ENCODE measurements at regions of chr18 and their contacts with region 1.

Region 1: DNA sequence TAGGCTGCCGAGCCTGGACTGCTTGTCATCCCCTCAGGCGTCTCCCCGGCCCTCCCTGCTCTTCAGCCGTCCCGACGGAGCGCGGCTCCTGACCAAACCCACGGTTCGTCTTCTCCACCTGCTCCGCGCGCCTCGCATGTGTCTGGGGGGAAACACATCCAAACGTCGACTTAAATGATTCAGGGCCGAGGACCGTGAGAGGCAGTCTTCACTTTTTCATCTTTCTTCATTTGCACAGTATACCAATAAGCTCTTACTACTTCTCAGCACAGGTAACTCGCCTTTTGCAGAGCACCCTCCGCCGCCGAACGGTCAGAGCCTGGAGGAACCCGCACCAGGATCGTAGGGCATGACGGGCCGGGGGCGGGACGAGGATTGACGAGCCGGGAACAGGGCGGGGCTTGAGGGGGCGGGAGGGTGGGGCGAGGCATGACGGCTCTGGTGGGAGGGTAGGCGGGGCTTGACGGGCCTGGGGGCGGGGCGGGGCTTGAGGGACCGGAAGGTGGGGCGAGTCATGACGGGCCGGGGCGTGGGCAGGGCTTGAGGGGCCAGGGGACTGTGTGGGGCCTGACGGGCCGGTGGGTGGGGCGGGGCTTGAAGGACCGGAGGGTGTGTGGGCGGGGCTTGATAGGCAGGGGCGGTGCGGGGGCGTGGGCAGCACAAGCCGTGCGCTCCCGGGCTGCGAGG is at the start of gene SEH1L:
- DNase-seq: peak; percentile 100
- H3K4me3 ChIP-seq: peak within 1 kb of the TSS; percentile 55 to 72 (median 64)
- H3K27ac ChIP-seq: peak within 1 kb of the TSS; percentile 94 to 99 (median 98)
- H3K4me1 ChIP-seq: peaks cover 0 to 24% (median 16%) of the 10 kb centered on the region in 4 donors
- H3K27me3 ChIP-seq: no peaks in the 10 kb centered on the region
- CTCF ChIP-seq: no peak
- EP300 ChIP-seq: no peak
- POLR2A ChIP-seq: peak; percentile 52 to 56
- total RNA-seq, gene SEH1L: 15.3 to 38.1 (median 20.3) TPM

Region 2: DNA sequence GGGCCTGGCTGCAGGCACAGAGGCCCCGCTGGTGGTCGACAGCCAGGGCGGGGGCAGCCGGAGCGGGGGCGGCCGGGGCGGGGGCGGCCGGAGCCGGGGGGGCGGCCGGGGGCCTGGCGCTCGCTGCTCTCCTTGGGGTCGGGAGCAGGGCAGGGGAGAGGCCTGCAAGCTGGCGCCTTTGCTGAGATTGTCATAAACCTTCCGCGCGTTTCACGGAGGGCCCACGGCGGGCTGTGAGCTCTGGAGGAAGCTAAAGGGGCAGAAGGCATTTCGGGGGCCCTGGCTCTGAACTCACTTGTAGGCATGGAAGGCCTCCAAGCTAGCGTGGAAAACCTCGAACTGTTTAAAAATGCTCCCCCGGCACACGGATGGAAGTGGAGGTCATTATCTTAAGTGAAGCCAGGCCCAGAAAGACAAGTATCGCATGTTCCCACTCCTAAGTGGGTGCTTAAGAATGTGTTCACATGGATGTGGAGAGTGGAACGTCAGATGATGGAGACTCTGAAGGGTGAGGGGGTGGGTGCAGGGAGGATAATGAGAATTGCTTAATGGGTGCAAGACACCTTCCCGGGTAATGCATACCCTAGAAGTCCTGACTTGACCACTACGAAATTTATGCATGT is 539.1 kb before region 1 on chr18:
- intact Hi-C with region 1: loop called (anchors 10 kb)
- DNase-seq: no peak
- H3K4me3 ChIP-seq: peak overlapping the region; percentile 49 to 71 (median 64)
- H3K27ac ChIP-seq: peak overlapping the region; percentile 86 to 93 (median 92)
- H3K4me1 ChIP-seq: peaks cover 0 to 28% (median 16%) of the 10 kb centered on the region in 4 donors
- H3K27me3 ChIP-seq: no peaks in the 10 kb centered on the region
- CTCF ChIP-seq: no peak
- EP300 ChIP-seq: no peak
- POLR2A ChIP-seq: no peak

Region 3: DNA sequence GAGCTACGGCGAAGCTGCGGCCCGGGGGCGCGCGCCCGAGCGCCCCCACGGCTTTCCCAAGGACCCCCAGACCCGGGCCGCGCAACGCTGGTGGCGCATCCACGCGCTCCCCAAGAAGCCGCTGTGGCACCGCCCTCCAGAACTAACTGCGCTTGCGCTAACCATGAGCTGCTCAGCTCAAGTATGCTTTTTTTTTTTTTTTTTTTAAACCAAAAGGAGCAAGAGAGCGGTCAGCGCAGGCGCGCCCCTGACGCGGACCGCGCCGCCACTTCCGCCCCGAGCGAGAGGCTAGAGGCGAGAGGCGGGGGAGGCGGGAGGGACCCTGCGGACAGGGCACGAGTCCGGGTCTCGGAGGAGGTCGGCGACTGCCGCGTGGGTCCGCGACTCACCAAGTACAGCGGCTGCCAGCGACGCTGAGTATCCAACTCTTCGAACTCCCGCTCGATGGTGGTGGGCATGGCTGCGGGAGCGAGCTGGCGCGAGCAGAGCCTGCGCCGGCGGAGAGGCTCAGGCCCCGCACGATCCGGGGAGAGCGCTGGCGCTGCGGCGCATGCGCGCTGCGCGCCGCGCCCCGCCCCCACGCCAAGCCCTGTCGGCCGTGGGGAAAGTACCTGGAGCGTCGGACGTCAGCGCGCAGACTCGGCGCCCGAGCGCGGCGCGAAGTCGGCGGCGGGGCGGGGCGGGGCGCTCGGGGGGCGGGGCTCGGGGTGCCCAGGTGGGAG is 63.7 kb before region 1 on chr18 and contains the start of gene PTPN2:
- intact Hi-C with region 1: loop called (anchors 2 kb)
- DNase-seq: peak; percentile 98
- H3K4me3 ChIP-seq: peak within 1 kb of the TSS; percentile 68 to 87 (median 77)
- H3K27ac ChIP-seq: peak within 1 kb of the TSS; percentile 95 to 100 (median 98)
- H3K4me1 ChIP-seq: peaks cover 0 to 26% (median 15%) of the 10 kb centered on the region in 4 donors
- H3K27me3 ChIP-seq: no peaks in the 10 kb centered on the region
- CTCF ChIP-seq: no peak
- EP300 ChIP-seq: peak in 1 of 4 donors; percentile 9
- POLR2A ChIP-seq: peak; percentile 82 to 85
- total RNA-seq, gene PTPN2: 20.0 to 31.0 (median 21.0) TPM

Region 4: DNA sequence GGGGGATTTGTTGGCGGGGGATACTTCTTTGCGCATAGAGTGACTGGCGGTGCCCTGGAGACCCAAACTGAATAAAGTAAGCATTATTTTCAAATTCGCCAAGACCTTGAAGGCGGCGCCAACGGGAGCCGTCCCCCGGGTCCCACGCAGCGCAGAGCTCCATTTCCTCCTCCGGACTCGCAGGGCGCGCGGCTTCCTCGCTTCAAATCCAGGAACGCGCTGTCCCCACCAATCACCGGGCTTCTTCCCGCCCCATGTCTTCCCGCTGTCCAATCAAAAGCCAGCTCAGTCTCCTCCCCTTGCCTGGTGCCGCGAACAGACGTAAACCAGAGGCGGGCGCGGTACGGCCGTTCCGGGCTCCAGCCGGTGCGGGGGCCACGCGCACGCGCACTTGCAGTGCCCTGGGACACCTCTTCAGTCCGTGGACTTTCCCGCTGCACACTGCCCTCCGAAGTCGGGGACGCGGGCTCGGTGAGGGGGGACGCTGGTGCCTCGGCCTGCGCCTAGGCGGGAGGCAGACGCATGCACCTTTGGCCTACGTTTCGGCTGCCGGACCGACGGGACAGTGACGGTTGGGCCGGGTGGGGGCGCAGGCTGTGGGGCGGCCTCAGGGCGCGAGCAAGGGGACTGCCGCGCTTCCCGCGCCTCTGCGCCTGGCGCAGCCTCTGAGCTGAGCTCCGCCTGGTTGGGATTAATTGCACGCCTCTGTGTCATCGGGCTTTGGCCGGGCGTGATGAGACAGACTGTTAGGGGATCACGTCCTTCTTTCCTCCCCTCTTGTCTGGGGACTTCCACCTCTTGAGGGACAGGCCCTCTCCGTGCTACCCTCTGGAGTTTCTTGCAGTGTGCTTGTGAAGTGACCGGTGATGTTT is 43.7 kb after region 1 on chr18 and contains the start of gene CEP192:
- intact Hi-C with region 1: loop called (anchors 1 kb)
- DNase-seq: peak; percentile 99
- H3K4me3 ChIP-seq: peak within 1 kb of the TSS; percentile 66 to 86 (median 71)
- H3K27ac ChIP-seq: peak within 1 kb of the TSS; percentile 81 to 88 (median 87)
- H3K4me1 ChIP-seq: peaks cover 0 to 29% (median 20%) of the 10 kb centered on the region in 4 donors
- H3K27me3 ChIP-seq: no peaks in the 10 kb centered on the region
- CTCF ChIP-seq: no peak
- EP300 ChIP-seq: no peak
- POLR2A ChIP-seq: peak; percentile 44 to 66
- total RNA-seq, gene CEP192: 19.8 to 30.4 (median 25.4) TPM